ENCODE measurements at regions of chr1 and their contacts with region 1.

Region 1: DNA sequence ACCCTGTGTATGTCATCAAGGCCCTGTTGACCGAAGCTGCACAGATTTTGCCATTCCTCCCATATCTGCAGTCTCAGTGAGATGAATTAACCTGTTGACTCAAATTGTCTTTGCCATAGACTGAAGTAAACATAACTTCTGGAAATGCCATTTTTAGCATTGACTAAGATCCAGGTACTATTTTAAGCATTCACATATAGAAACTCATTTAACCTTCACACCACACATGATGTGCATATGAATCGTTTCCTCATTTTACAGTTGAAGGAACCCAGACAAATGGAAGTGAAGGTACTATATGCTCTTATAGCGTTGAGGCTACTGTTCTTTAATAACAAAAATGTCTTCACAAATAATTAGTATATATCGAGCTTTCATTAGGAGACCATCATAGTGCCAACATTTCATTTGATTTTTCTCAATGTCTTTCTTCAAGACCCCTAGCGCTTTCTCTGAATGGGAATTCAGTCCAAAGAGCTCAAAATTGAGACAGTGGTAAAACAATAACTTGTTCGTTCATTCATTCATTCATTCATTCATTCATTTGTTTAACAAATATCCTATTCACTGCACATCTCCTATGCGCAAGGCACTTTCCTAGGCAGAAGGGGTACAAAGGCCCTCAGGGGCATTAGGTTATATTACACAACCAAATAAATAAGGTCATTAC is 444.7 kb downstream of the ADGRL2 start:
- DNase-seq: no peak
- ATAC-seq: peak; percentile 91
- H3K4me3 ChIP-seq: no peak overlapping the region
- H3K27ac ChIP-seq: no peak overlapping the region
- H3K4me1 ChIP-seq: no peaks in the 10 kb centered on the region
- H3K27me3 ChIP-seq: no peaks in the 10 kb centered on the region
- CTCF ChIP-seq: no peak
- EP300 ChIP-seq: no peak
- POLR2A ChIP-seq: no peak
- RAD21 ChIP-seq: no peak

Region 2: DNA sequence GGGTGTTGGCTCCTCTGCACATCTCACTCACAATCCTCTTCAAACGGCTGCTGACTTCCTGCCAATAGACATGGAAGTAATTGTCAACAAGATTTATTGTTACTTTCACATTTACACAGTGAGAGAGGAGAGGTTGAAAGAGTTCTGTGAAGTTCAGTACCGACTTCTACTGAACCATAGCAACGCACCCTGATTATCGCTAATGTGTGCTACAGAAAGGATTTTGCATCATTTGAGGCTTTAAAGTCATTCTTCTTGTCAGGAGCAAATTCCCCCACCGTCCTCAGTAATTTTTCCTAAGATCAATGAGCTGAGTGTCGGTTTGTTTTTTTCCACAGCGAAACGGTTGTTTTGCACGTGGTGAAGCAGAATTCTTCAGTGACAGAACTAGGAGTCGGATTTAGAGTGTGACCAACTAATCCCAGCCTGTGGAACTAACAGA is 83.8 kb before region 1 on chr1:
- CTCF ChIA-PET with region 1: no interaction called
- POLR2A ChIA-PET with region 1: interaction called, 4 read pairs
- RAD21 ChIA-PET with region 1: no interaction called
- SMC1A ChIA-PET with region 1: interaction called, 14 read pairs
- in situ Hi-C with region 1: no loop called
- intact Hi-C with region 1: no loop called
- DNase-seq: no peak
- ATAC-seq: peak; percentile 91
- H3K4me3 ChIP-seq: no peak overlapping the region
- H3K27ac ChIP-seq: no peak overlapping the region
- H3K4me1 ChIP-seq: no peaks in the 10 kb centered on the region
- H3K27me3 ChIP-seq: no peaks in the 10 kb centered on the region
- CTCF ChIP-seq: no peak
- EP300 ChIP-seq: peak in 1 of 2 experiments; percentile 25; a peak in 1 of 4 replicates
- POLR2A ChIP-seq: no peak
- RAD21 ChIP-seq: no peak

Region 3: DNA sequence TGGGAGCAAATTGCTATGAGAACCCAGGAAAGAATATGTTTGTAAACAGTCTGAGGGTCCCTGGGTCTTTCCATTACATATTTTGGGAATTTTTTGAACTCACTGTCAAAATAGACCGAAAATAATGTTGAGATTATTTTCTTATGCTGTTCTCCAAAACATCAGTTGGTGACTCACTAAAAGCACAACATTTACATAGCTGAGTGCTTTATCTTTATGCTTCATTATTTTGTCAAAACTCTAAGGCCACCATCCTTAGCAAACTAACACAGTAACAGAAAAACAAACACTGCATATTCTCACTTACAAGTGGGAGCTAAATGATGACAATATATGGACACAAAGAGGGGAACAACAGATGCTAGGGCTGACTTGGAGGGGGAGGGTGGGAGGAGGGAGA is 14.6 kb after region 1 on chr1:
- CTCF ChIA-PET with region 1: interaction called, 4 read pairs
- POLR2A ChIA-PET with region 1: interaction called, 6 read pairs
- RAD21 ChIA-PET with region 1: interaction called, 5 read pairs
- SMC1A ChIA-PET with region 1: interaction called, 10 read pairs
- in situ Hi-C with region 1: no loop called
- intact Hi-C with region 1: no loop called
- DNase-seq: no peak
- ATAC-seq: no peak
- H3K4me3 ChIP-seq: no peak overlapping the region
- H3K27ac ChIP-seq: no peak overlapping the region
- H3K4me1 ChIP-seq: no peaks in the 10 kb centered on the region
- H3K27me3 ChIP-seq: no peaks in the 10 kb centered on the region
- CTCF ChIP-seq: no peak
- EP300 ChIP-seq: no peak
- POLR2A ChIP-seq: no peak
- RAD21 ChIP-seq: no peak

Measured in GM12878 (cell line).